ENCODE measurements at regions of chr6 and their contacts with region 1.

Region 1: GRCh38 chr6:156752666-156753301 is 24.4 kb upstream of the ARID1B start:
- DNase-seq: peak; percentile 48
- CTCF ChIP-seq: peak; percentile 39

Region 2: DNA sequence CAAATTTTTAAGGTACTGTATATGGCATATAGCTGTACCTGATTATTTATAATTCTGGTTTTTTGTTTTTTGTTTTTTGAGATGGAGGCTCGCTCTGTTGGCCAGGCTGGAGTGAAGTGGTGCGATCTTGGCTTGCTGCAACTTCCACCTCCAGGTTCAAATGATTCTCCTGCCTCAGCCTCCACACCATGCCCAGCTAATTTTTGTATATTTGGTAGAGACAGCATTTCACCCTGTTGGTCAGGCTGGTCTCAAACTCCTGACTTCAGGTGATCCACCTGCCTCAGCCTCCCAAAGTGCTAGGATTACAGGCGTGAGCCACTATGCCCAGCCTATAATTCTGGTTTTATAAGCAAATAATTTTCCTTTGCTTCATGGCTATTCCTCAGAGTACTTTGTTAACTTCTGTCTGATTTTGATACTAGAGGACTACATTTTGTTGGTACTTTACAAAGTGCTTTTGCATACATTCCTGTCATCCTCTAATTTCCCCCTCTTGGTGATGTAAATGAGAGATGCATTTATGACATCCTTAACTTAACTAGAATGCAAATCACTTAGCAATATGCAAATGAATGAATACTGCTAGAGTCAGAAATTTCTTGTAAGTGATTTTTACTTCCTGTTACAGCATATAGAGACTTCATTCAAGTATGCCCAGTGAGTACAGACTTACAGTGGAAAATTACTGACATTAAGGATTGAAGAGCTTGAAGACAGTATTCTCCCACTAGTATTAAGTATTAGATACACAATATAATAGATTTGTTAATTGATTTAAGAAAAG is 11.3 kb before region 1 on chr6:
- CTCF ChIA-PET with region 1: interaction called, 15 read pairs
- POLR2A ChIA-PET with region 1: no interaction called
- DNase-seq: no peak
- CTCF ChIP-seq: no peak

Region 3: DNA sequence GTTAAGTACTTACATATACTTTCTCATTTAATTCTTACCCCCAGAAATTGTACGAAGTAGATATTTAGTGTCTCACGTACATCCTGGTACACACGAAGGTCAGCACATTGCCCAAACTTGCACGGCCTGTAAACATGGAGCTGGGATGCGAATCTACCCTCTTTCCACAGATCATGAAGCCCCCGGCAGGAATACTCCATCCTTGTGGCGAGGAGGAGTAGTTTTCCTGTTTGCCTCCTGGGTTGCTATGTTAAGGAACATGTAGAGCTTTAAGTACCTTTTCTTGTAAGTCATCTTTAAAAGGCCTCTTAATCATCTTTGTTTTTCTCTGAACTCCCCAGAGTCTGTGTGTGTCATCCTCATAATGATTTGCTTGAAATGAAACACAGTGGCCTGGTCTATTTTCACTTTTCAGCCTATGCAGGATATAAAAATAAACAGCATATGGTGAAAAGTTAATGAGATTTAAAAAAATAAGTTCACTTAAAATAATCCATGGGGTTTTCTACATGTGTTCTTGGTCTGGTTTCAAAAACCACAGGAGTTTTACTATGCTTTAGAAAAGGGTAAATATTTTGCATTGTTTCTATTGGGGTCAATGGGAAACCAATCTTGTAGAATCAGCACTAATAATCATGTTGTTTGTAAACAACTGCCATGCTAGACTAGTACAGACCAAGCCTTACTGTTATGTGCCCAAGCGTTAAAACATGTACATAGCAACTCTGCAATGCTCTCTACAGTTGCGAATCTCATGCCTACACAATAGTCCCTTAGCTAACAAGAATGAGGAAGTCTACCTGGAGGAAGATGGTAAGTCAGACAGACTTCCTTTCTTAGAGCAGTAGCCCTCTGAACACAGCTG is 15.1 kb after region 1 on chr6:
- CTCF ChIA-PET with region 1: interaction called, 17 read pairs
- POLR2A ChIA-PET with region 1: no interaction called
- DNase-seq: peak; percentile 67
- CTCF ChIP-seq: no peak

Measured in GM10248 (cell line).